ENCODE measurements at regions of chr11 and their contacts with region 1.

Region 1: DNA sequence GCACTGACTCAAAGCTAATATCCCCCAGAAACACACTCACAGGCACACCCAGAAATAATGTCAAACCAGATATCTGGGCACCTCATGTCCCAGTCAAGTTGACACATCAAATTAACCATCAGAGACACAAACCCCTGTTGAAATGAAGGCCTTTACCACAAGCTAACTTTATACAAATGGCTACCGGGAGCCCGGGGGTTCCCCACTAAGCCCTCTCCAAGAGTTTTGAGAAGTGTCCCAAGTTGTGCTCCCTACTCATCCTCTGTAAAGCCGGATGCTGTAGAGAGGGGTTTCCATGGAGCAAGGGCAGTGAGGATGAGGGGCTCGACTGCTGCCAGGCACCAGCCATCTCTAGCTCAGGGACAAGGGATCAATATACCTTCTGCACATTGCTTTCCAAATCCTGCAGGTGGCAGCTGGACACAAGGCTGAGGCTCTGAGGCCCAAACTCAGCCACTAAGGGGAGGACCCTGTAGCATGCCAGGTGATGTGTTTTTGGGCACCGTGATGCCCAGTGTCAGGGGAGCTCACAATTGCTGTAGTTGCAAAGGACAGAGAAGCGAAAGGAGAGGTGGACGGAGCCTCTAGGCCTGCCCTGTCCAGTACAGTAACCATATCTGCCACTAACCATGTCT is 145.7 kb downstream of the TTC17 start:
- DNase-seq: peak; percentile 32
- H3K4me3 Mint-ChIP-seq: no peak overlapping the region
- H3K27ac Mint-ChIP-seq: no peak overlapping the region
- H3K4me1 Mint-ChIP-seq: no peaks in the 10 kb centered on the region
- H3K27me3 Mint-ChIP-seq: peaks cover 52% of the 10 kb centered on the region
- CTCF ChIP-seq: no peak

Region 2: GRCh38 chr11:43567396-43567975 is 63.1 kb after region 1 on chr11:
- CTCF ChIA-PET with region 1: interaction called, 8 read pairs
- intact Hi-C with region 1: loop called (anchors 1 kb)
- DNase-seq: no peak
- H3K4me3 Mint-ChIP-seq: no peak overlapping the region
- H3K27ac Mint-ChIP-seq: no peak overlapping the region
- H3K4me1 Mint-ChIP-seq: no peaks in the 10 kb centered on the region
- H3K27me3 Mint-ChIP-seq: peaks cover 85% of the 10 kb centered on the region
- CTCF ChIP-seq: peak; percentile 65

Region 3: GRCh38 chr11:43708776-43709175 is 204.3 kb after region 1 on chr11:
- CTCF ChIA-PET with region 1: no interaction called
- intact Hi-C with region 1: loop called (anchors 10 kb)
- DNase-seq: no peak
- H3K4me3 Mint-ChIP-seq: no peak overlapping the region
- H3K27ac Mint-ChIP-seq: no peak overlapping the region
- H3K4me1 Mint-ChIP-seq: no peaks in the 10 kb centered on the region
- H3K27me3 Mint-ChIP-seq: no peaks in the 10 kb centered on the region
- CTCF ChIP-seq: no peak

Region 4: GRCh38 chr11:44036811-44037657 is 532.6 kb after region 1 on chr11:
- CTCF ChIA-PET with region 1: no interaction called
- intact Hi-C with region 1: loop called (anchors 5 kb)
- DNase-seq: peak; percentile 69
- H3K4me3 Mint-ChIP-seq: no peak overlapping the region
- H3K27ac Mint-ChIP-seq: no peak overlapping the region
- H3K4me1 Mint-ChIP-seq: no peaks in the 10 kb centered on the region
- H3K27me3 Mint-ChIP-seq: peaks cover 69% of the 10 kb centered on the region
- CTCF ChIP-seq: peak; percentile 69